A673 (cell line): ENCODE measurements at regions of chr17 and their contacts with region 1.

Region 1: DNA sequence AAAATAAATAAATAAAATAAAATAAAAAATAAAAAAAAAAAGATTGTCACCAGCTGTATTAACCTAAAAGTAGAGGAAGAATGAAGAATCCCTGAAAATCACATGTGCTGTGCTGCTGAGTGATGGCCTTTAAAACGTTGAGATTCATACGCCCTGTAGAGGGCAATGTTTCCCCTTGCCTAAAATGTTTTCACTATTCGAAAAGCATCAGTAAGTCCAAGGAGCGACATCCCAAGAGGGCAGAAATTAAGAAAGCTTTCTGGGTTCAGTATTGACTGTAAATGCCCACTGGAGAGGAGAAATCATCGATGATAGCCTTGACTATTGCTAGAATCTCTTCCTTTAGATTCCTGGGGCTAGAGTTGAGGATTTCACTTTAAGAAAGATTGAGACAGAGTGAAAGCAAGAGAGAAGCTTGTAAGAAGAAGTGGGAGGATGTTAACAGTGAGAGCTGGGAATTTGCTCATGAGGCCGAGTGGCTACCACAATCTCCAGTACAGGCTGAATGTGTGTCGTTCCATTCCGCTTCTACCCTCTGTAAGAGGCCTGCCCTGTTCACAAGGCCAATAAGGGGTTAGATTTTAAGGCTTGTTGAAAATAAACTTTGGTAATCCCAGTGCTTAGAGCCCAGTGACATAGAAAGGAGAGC is 170.8 kb upstream of the FAM20A start:
- DNase-seq: peak; percentile 90
- H3K4me3 ChIP-seq: no peak overlapping the region
- H3K27ac ChIP-seq: peak overlapping the region; percentile 55
- H3K4me1 ChIP-seq: peaks cover 40% of the 10 kb centered on the region
- H3K27me3 ChIP-seq: no peaks in the 10 kb centered on the region
- CTCF ChIP-seq: peak; percentile 77

Region 2: DNA sequence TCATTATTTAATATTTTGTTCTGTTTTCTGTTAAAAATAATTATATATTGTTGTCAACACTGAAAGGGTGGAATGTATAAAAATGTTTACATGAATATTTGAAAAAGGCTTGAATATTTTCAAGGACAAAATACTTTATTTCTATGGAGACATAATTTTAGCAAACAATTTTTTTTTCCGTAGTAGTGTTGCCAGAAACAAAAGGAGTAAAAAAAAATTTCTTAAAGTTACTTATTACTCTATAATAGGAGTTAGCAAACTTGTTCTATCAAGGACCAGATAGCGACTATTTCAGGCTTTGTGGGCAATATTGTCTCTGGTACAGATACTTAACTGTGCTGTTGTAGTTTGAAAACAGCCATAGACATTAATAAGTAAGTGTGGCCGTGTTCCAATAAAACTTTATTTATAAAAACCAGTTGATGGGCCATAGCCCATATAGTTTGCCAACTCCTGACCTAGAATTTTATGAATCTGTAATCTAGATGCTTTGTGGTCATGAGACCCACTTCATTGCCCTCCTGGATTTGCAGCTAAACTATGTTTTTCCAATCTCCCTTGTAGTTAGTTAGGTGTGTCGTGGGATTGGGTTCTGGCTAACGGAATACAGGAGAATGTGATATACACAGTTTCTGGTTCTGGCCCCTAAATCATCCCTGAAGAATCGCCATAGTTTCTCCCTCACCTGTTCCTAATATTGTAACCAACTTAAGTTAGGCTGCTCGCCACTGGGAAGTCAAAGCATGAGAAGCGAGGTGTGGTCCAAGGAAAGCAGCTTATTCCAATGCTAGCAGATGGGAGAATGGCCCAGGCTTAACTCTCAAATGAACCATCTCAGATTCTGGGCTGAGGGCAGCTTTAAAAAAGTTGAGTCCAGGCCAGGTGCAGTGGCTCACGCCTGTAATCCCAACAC is 29.6 kb after region 1 on chr17:
- CTCF ChIA-PET with region 1: interaction called, 12 read pairs
- POLR2A ChIA-PET with region 1: no interaction called
- intact Hi-C with region 1: no loop called
- DNase-seq: no peak
- H3K4me3 ChIP-seq: no peak overlapping the region
- H3K27ac ChIP-seq: no peak overlapping the region
- H3K4me1 ChIP-seq: peaks cover 16% of the 10 kb centered on the region
- H3K27me3 ChIP-seq: no peaks in the 10 kb centered on the region
- CTCF ChIP-seq: no peak

Region 3: DNA sequence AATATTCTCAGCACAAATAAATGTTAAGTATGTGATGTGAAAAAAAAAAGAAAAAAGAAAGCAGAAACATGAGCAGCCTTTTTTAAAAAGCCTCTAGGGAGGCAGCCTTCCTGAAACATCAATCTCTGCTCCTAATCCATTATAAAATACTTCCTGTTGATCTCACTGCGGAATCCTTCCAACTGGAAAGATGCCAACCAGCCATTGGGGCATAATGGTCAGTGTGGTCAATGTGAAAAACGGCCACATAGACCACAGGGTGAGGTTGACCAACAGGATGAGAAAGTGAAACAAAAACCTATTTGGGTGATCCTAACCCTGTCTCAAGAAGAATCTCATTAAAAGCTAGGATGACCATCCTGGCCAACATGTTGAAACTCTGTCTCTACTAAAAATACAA is 209.3 kb after region 1 on chr17:
- CTCF ChIA-PET with region 1: interaction called, 11 read pairs
- POLR2A ChIA-PET with region 1: no interaction called
- intact Hi-C with region 1: no loop called
- DNase-seq: peak; percentile 92
- H3K4me3 ChIP-seq: no peak overlapping the region
- H3K27ac ChIP-seq: no peak overlapping the region
- H3K4me1 ChIP-seq: peaks cover 13% of the 10 kb centered on the region
- H3K27me3 ChIP-seq: no peaks in the 10 kb centered on the region
- CTCF ChIP-seq: no peak

Region 4: DNA sequence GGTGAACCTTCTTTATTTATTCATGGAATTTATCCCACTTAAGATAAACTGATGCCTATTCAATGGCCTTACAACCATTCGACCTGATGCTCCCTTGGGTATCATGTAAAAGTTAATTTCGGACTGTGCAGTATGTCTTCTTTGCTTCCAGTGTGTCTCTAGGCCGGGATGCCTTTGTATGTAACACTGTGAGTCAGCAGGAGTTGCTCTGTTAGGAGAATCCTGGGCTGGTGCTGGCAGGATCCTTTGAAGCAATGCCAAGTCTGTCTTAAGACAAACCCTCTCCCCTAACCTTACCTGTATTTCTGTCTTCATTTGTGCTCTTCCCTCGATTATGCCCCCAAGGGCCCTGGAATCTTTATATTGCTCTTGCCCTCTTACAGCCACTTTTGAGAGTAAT is 221.1 kb after region 1 on chr17:
- CTCF ChIA-PET with region 1: no interaction called
- POLR2A ChIA-PET with region 1: no interaction called
- intact Hi-C with region 1: no loop called
- DNase-seq: no peak
- H3K4me3 ChIP-seq: no peak overlapping the region
- H3K27ac ChIP-seq: no peak overlapping the region
- H3K4me1 ChIP-seq: no peaks in the 10 kb centered on the region
- H3K27me3 ChIP-seq: no peaks in the 10 kb centered on the region
- CTCF ChIP-seq: no peak

Region 5: DNA sequence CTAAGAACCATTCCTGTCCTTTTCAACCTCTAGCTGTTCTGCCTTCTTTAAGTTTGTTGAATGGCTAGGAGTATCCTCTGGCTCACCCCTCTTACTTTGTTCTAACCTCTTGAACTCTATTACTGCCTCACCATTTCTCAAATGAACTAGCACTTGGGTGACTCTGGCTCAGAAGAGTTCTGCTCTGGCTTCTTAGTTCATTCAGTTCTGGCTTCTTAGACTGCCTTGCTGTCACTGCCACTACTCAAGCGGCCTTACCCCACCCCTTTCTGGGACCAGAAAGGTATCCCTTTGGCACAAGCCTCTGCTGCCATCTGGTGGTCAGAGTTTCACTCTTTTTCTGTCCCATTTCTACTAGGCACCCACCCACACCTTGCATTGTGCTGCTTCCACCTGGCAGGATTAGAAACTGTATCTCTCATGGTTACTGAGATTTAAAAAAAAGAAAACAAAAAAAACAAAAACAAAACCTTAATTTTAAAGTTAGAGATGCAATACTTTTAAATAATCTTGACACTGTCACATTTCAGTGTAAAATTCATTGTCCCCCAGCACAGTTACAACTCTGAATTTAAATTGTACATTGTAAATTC is 463.4 kb after region 1 on chr17:
- CTCF ChIA-PET with region 1: interaction called, 9 read pairs
- POLR2A ChIA-PET with region 1: no interaction called
- intact Hi-C with region 1: loop called (anchors 1 kb)
- DNase-seq: peak; percentile 94
- H3K4me3 ChIP-seq: no peak overlapping the region
- H3K27ac ChIP-seq: peak overlapping the region; percentile 39
- H3K4me1 ChIP-seq: peaks cover 16% of the 10 kb centered on the region
- H3K27me3 ChIP-seq: no peaks in the 10 kb centered on the region
- CTCF ChIP-seq: peak; percentile 84

Region 6: GRCh38 chr17:69246726-69247375 is 474.9 kb after region 1 on chr17:
- CTCF ChIA-PET with region 1: interaction called, 11 read pairs
- POLR2A ChIA-PET with region 1: no interaction called
- intact Hi-C with region 1: no loop called
- DNase-seq: peak; percentile 77
- H3K4me3 ChIP-seq: no peak overlapping the region
- H3K27ac ChIP-seq: no peak overlapping the region
- H3K4me1 ChIP-seq: peaks cover 10% of the 10 kb centered on the region
- H3K27me3 ChIP-seq: no peaks in the 10 kb centered on the region
- CTCF ChIP-seq: peak; percentile 65

Region 7: GRCh38 chr17:69388822-69389442 is 616.9 kb after region 1 on chr17:
- CTCF ChIA-PET with region 1: interaction called, 4 read pairs
- POLR2A ChIA-PET with region 1: no interaction called
- intact Hi-C with region 1: loop called (anchors 10 kb)
- DNase-seq: peak; percentile 20
- H3K4me3 ChIP-seq: no peak overlapping the region
- H3K27ac ChIP-seq: no peak overlapping the region
- H3K4me1 ChIP-seq: no peaks in the 10 kb centered on the region
- H3K27me3 ChIP-seq: no peaks in the 10 kb centered on the region
- CTCF ChIP-seq: no peak

Region 8: GRCh38 chr17:69523244-69523861 is 751.4 kb after region 1 on chr17:
- CTCF ChIA-PET with region 1: no interaction called
- POLR2A ChIA-PET with region 1: no interaction called
- intact Hi-C with region 1: loop called (anchors 2 kb)
- DNase-seq: peak; percentile 69
- H3K4me3 ChIP-seq: no peak overlapping the region
- H3K27ac ChIP-seq: no peak overlapping the region
- H3K4me1 ChIP-seq: no peaks in the 10 kb centered on the region
- H3K27me3 ChIP-seq: no peaks in the 10 kb centered on the region
- CTCF ChIP-seq: peak; percentile 77